Heart left ventricle (tissue), 16 donors: ENCODE measurements at regions of chr1 and their contacts with region 1.

Region 1: DNA sequence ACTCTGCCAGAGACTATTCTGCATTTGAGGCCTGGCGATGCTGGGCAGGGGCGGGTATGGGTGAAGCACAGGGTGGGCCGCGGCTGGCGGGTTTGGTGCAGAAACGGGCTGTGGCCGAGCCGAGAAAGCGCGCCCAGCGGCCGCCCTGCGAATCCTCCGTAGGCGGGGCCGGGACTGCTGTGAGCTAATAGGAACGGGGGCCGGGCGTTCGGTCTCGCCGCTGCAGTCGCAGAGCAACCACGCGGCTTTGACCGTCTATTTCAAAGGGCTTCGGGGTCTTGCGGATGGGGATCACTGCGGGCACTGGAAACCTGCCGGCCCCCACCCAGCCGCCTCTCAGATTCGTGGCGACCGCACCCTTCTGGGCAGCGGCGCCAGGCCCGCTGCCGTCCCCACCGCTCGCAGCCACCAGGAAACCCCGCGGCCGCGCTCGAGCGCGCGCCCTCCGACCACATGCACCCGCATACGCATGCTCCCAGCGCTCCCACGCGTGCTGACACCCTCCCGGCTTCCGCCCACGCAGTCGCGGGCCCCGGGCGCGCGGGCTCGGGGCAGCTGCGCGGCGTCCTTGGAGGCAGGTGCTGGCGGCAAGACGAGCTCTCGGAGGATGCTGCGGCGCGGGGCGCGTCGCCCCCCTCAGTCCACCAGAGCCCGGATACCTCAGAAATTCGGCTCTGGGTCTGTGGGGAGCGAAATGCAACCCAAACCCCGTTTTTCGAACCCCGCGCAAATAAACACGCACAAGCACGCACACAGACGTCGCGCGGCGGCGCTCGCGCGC is 32.6 kb downstream of the DNTTIP2 start:
- DNase-seq: peak; percentile 89 to 93 (median 90)
- ATAC-seq: peak; percentile 49 to 78 (median 74)
- H3K4me3 ChIP-seq: peak overlapping the region; percentile 79 to 93 (median 86)
- H3K27ac ChIP-seq: peak overlapping the region; percentile 87 to 99 (median 98)
- H3K4me1 ChIP-seq: peaks cover 0 to 34% (median 22%) of the 10 kb centered on the region in 12 donors
- H3K27me3 ChIP-seq: no peaks in the 10 kb centered on the region
- CTCF ChIP-seq: peak in 9 of 12 donors; percentile 17 to 59 (median 39)
- POLR2A ChIP-seq: peak in 1 of 2 donors; percentile 47

Region 2: DNA sequence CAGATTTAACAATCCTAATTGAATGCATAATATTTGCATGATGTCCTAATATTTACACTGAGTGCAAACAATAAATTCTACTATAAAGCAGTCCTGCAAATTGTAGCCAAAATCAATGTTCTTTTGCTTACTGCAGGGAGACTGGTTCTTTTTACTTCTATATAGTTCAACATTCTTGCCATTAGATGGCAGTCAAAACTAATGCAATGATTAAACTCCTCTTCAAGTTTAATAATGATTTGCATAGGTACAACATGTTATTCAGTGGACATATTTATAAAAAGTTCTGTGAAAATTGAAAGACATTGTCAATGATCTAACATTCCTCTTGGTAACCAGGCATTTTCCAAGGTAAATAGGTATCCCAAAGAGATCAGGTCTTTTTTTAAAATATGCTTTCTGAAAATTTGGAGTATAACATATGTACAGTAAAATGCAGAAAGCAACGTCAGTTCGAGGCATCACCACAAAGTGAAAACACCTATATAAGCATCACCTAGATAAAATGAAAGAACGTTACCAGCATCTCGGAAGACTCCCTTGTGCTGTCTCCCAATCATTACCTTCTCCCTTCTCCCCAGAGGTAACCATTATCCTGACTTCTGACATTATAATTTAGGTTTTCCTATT is 408.3 kb before region 1 on chr1:
- intact Hi-C with region 1: loop called in 8 of 10 experiments (anchors 2 to 10 kb)
- DNase-seq: no peak
- ATAC-seq: peak; percentile 42 to 71 (median 46)
- H3K4me3 ChIP-seq: no peak overlapping the region
- H3K27ac ChIP-seq: no peak overlapping the region
- H3K4me1 ChIP-seq: peaks cover 0 to 7% (median 0%) of the 10 kb centered on the region in 12 donors
- H3K27me3 ChIP-seq: no peaks in the 10 kb centered on the region
- CTCF ChIP-seq: peak; percentile 63 to 82 (median 72)
- POLR2A ChIP-seq: no peak

Region 3: DNA sequence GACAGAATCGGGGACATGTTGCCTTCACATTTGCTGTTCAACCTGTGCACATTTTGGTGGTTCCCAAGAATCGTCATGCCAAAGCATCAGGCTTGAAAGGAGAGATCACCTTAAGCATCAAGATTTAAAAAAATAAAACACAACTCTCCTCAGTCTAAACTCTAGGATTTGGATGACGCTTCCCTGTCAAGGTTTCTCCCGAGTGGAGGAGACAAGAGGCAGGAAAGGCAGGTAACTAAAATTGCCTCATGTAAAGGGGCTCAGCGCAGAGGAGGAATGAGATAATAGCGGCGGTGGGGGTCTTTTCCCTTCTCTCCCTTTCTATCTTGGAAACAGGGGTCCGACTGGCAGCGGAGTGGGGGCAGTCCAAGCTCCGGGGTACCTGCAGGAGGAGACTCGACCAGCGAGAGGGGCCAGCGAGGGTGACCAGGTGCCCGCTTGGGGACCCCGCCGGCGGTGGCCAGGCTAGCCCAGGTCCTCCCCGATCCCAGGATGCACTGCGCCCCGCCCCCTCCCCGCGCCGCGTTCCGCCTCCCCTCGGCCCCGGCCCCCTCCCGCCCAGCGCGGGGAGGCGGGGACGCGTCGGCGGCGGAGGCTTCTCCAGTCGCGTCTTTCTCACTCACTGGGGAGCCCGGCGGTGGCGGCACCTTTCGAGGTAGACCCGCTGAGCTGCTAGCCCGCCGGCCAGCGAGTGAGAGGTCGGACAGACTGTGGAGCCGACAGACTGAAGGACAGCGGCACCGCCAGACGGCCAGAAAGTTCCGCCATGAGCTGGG is 398.7 kb before region 1 on chr1 and contains the start of gene FNBP1L:
- intact Hi-C with region 1: loop called in 1 of 10 experiments (anchors 5 kb)
- DNase-seq: peak; percentile 83 to 87 (median 85)
- ATAC-seq: peak; percentile 83 to 96 (median 96)
- H3K4me3 ChIP-seq: peak within 1 kb of the TSS; percentile 70 to 100 (median 95)
- H3K27ac ChIP-seq: peak within 1 kb of the TSS; percentile 54 to 95 (median 89)
- H3K4me1 ChIP-seq: peaks cover 0 to 30% (median 9%) of the 10 kb centered on the region in 12 donors
- H3K27me3 ChIP-seq: no peaks in the 10 kb centered on the region
- CTCF ChIP-seq: no peak
- POLR2A ChIP-seq: peak in 1 of 2 donors; percentile 65
- total RNA-seq, gene FNBP1L: 20.5 to 38.8 (median 25.5) TPM

Region 4: GRCh38 chr1:93552741-93553455 is 293.5 kb before region 1 on chr1:
- intact Hi-C with region 1: loop called in 2 of 10 experiments (anchors 5 to 10 kb)
- DNase-seq: peak in 2 of 5 donors; percentile 51 to 58
- ATAC-seq: peak; percentile 38 to 64 (median 48)
- H3K4me3 ChIP-seq: no peak overlapping the region
- H3K27ac ChIP-seq: peak overlapping the region; percentile 38 to 72 (median 64)
- H3K4me1 ChIP-seq: peaks cover 15 to 45% (median 35%) of the 10 kb centered on the region in 12 donors
- H3K27me3 ChIP-seq: no peaks in the 10 kb centered on the region
- CTCF ChIP-seq: no peak
- POLR2A ChIP-seq: no peak

Region 5: GRCh38 chr1:93909146-93910050 is 63.0 kb after region 1 on chr1 and contains the start of gene GCLM:
- intact Hi-C with region 1: loop called in 1 of 10 experiments (anchors 5 kb)
- DNase-seq: peak; percentile 88 to 97 (median 95)
- ATAC-seq: peak; percentile 93 to 98 (median 96)
- H3K4me3 ChIP-seq: peak within 1 kb of the TSS; percentile 70 to 99 (median 88)
- H3K27ac ChIP-seq: peak within 1 kb of the TSS; percentile 74 to 92 (median 83)
- H3K4me1 ChIP-seq: peaks cover 0 to 41% (median 13%) of the 10 kb centered on the region in 12 donors
- H3K27me3 ChIP-seq: no peaks in the 10 kb centered on the region
- CTCF ChIP-seq: peak; percentile 68 to 100 (median 92)
- POLR2A ChIP-seq: peak in 1 of 2 donors; percentile 69
- total RNA-seq, gene GCLM: 4.2 to 21.9 (median 12.5) TPM